GM18951 (cell line): ENCODE measurements at regions of chr19 and their contacts with region 1.

Region 1: GRCh38 chr19:6056801-6057650 is 53.3 kb downstream of the RFX2 start:
- POLR2A ChIP-seq: no peak

Region 2: DNA sequence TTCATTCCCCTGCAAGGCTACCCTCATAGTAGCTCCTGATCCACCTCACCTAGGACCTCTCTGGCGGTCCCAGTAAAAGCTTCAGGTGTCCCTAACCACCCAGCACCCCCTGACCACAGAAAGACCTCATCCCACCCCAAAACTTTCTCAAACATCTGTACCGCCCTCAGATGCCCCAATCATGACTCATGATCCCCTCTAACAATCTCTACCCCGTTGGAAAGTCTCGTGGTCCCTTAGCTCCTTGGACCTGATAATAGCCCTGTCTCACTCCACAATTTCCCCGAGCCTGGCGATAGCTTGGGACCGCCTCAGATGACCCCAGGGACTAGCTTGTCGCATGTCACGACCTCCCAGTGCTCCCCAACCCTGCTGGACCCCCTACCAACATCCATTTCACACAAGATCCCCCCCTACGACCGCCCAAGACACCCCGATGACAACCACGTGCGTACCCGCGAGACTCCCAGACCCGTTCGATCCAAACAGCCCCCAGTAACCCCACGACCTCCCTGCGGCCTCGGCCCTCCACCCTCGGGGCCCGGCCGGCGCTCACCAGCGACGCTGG is 153.9 kb before region 1 on chr19:
- in situ Hi-C with region 1: no loop called
- POLR2A ChIP-seq: no peak

Region 3: DNA sequence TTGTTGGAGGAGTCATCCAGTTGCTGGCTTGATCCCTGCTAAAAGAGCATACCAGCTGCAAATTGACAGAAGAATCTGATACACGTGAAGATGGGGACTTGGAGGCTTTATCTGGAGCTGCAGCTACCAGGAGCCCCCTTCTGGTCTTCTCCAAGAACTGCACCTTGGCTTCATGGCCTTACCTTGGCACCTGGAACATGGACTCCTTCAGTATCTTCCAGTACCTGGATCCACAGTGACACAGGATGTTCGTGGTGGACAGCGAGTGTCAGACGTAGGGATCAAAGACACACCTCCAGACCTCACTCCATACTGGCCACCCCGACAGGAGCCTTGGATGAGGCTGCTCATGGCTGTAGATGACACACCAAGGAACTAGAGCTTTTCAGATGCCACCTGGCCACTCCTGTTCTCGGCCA is 68.6 kb after region 1 on chr19:
- in situ Hi-C with region 1: loop called (anchors 5 kb)
- POLR2A ChIP-seq: no peak

Region 4: GRCh38 chr19:6312018-6312417 is 255.0 kb after region 1 on chr19:
- in situ Hi-C with region 1: loop called (anchors 10 kb)
- POLR2A ChIP-seq: no peak